ENCODE measurements at regions of chr5 and their contacts with region 1.

Region 1: DNA sequence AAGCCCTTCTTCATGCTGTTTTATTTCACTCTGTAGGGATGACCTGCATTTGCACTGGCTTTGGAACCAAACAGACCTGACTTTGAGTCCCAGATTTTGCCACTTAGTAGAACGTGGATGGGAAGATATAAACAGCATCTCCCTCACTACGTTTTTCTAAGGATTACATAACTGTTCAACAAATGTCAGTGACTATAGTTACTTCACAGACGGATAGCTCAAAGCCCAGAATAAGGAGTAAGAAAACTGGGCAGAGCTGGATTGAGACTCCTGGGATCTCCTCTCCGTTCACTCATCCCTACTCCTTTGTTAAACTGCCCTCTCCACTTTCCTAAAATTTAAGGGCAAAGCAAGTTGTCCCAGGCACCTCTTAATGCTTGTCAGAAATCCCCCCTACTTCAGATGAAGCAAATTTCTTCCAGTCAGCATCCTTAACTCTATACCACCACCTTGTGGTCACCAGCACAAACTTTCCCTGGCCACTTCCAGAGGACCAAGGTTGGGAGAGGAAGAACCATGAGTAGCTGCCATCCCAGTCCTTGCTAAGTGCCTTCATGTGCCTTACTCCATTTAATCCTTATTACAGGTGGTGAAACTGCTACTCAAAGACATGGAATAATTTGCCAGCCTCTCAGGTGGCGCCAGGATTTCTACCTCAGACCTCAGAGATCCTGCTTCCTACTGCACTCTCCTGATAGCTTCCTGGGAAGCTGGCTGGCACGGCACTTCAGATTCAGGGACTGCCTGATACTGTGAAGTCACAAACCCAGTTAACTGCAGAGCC is 38.4 kb downstream of the EGR1 start:
- DNase-seq: peak; percentile 56 to 74
- H3K4me3 ChIP-seq: no peak overlapping the region
- H3K4me3 Mint-ChIP-seq: peak overlapping the region; percentile 12
- H3K27ac Mint-ChIP-seq: peak overlapping the region; percentile 40
- H3K4me1 ChIP-seq: peaks cover 1% of the 10 kb centered on the region; the same call in 1 of the 2 replicates
- H3K4me1 Mint-ChIP-seq: peaks cover 6% of the 10 kb centered on the region
- H3K27me3 ChIP-seq: no peaks in the 10 kb centered on the region
- H3K27me3 Mint-ChIP-seq: no peaks in the 10 kb centered on the region
- CTCF ChIP-seq: peak; percentile 56 to 85

Region 2: DNA sequence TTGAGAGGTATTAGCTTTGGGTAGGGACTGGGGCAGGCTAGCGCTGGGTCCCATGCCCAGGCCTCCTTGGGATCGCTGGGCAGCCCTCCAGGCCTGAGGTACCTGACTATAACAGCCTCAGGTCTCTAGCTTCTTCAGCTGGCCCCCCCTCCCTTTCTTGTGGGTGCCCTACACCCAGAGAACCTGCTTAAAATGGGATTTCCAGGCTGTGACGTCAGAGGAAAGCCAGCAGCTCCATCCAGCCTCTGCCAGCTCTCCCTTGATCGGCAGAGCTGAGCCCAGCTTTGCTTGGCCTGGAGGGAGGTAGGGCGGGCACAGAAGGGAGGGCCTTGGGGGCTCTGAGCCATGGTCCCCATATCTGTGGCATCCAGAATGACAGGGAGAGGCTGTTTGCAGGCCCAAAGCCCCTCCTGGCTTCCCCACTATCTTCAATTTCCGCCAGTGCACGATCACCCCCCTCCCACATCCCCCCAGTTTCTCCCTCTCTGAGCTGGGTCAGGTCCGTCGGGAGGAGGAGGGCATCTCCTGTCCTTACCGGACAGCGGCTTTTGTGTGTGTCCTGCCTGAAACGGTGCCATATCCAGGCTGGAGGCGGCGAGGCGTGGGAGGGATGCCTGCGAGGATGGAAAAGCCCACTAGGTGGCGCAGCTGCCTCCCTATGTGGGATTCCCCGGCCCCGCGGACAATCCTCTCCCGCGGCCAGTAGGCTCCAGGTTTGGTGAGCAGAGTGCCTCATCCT is 54.0 kb before region 1 on chr5:
- CTCF ChIA-PET with region 1: interaction called, 43 read pairs
- POLR2A ChIA-PET with region 1: no interaction called
- intact Hi-C with region 1: loop called (anchors 1 kb)
- DNase-seq: peak; percentile 84 to 92
- H3K4me3 ChIP-seq: no peak overlapping the region
- H3K4me3 Mint-ChIP-seq: no peak overlapping the region
- H3K27ac Mint-ChIP-seq: no peak overlapping the region
- H3K4me1 ChIP-seq: peaks cover 9% of the 10 kb centered on the region
- H3K4me1 Mint-ChIP-seq: no peaks in the 10 kb centered on the region
- H3K27me3 ChIP-seq: no peaks in the 10 kb centered on the region
- H3K27me3 Mint-ChIP-seq: no peaks in the 10 kb centered on the region
- CTCF ChIP-seq: peak; percentile 87 to 97

Region 3: GRCh38 chr5:138464008-138464387 is 39.7 kb before region 1 on chr5:
- CTCF ChIA-PET with region 1: interaction called, 34 read pairs
- POLR2A ChIA-PET with region 1: interaction called, 8 read pairs
- intact Hi-C with region 1: loop called (anchors 1 kb)
- DNase-seq: peak; percentile 92 to 95
- H3K4me3 ChIP-seq: peak overlapping the region; percentile 92
- H3K4me3 Mint-ChIP-seq: peak overlapping the region; percentile 73
- H3K27ac Mint-ChIP-seq: peak overlapping the region; percentile 96
- H3K4me1 ChIP-seq: no peaks in the 10 kb centered on the region; the same call in 1 of the 2 replicates
- H3K4me1 Mint-ChIP-seq: peaks cover 25% of the 10 kb centered on the region
- H3K27me3 ChIP-seq: no peaks in the 10 kb centered on the region
- H3K27me3 Mint-ChIP-seq: peaks cover 2% of the 10 kb centered on the region
- CTCF ChIP-seq: peak; percentile 65 to 97

Region 4: GRCh38 chr5:138469540-138470321 is 33.9 kb before region 1 on chr5:
- CTCF ChIA-PET with region 1: interaction called, 34 read pairs
- POLR2A ChIA-PET with region 1: interaction called, 10 read pairs
- intact Hi-C with region 1: loop called (anchors 1 kb)
- DNase-seq: peak; percentile 82 to 84
- H3K4me3 ChIP-seq: no peak overlapping the region
- H3K4me3 Mint-ChIP-seq: peak overlapping the region; percentile 54
- H3K27ac Mint-ChIP-seq: peak overlapping the region; percentile 88
- H3K4me1 ChIP-seq: peaks cover 10% of the 10 kb centered on the region
- H3K4me1 Mint-ChIP-seq: peaks cover 43% of the 10 kb centered on the region
- H3K27me3 ChIP-seq: no peaks in the 10 kb centered on the region
- H3K27me3 Mint-ChIP-seq: peaks cover 6% of the 10 kb centered on the region
- CTCF ChIP-seq: no peak

Region 5: GRCh38 chr5:138491669-138492559 is 11.8 kb before region 1 on chr5:
- CTCF ChIA-PET with region 1: interaction called, 18 read pairs
- POLR2A ChIA-PET with region 1: interaction called, 5 read pairs
- intact Hi-C with region 1: no loop called
- DNase-seq: peak; percentile 83 to 88
- H3K4me3 ChIP-seq: peak overlapping the region; percentile 54
- H3K4me3 Mint-ChIP-seq: peak overlapping the region; percentile 87
- H3K27ac Mint-ChIP-seq: peak overlapping the region; percentile 86
- H3K4me1 ChIP-seq: peaks cover 44% of the 10 kb centered on the region
- H3K4me1 Mint-ChIP-seq: peaks cover 16% of the 10 kb centered on the region
- H3K27me3 ChIP-seq: no peaks in the 10 kb centered on the region
- H3K27me3 Mint-ChIP-seq: peaks cover 3% of the 10 kb centered on the region
- CTCF ChIP-seq: no peak

Measured in Caco-2 (cell line).